ENCODE measurements at regions of chr6 and their contacts with region 1.

Region 1: GRCh38 chr6:7939184-7939863 is 28.7 kb upstream of the TXNDC5 start:
- DNase-seq: no peak
- ATAC-seq: no peak; the same call in 2 of the 3 replicates
- H3K4me3 ChIP-seq: no peak overlapping the region
- H3K27ac ChIP-seq: no peak overlapping the region
- H3K4me1 ChIP-seq: no peaks in the 10 kb centered on the region; a peak in 1 of 5 replicates
- H3K27me3 ChIP-seq: peaks cover 8 to 35% of the 10 kb centered on the region in 2 experiments; a peak in 3 of 5 replicates
- CTCF ChIP-seq: no peak
- EP300 ChIP-seq: no peak
- POLR2A ChIP-seq: no peak
- RAD21 ChIP-seq: no peak

Region 2: DNA sequence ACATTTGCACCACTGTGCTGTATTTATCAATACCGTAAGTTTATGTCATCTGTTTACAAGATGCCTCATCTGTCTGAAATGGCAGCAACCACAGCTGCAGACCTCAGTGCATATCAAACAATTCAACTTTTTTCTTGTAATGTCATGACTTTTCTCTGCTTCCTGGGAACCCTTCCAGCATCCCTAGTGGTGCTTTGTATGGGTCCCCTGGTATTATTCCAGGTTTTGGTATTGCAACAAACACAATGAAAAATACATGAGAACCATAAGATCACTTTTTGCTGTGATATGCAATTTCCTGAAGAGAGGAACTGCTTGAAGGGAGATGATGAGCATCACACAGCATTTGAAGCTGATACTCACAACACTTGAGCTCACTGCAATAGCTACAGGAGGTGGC is 16.7 kb before region 1 on chr6:
- CTCF ChIA-PET with region 1: interaction called, 6 read pairs
- POLR2A ChIA-PET with region 1: interaction called, 5 read pairs
- in situ Hi-C with region 1: no loop called
- intact Hi-C with region 1: loop called (anchors 2 kb)
- DNase-seq: no peak
- ATAC-seq: no peak
- H3K4me3 ChIP-seq: no peak overlapping the region
- H3K27ac ChIP-seq: no peak overlapping the region
- H3K4me1 ChIP-seq: peaks cover 7 to 18% of the 10 kb centered on the region in 2 experiments
- H3K27me3 ChIP-seq: peaks cover 6 to 30% of the 10 kb centered on the region in 2 experiments; a peak in 4 of 5 replicates
- CTCF ChIP-seq: no peak
- EP300 ChIP-seq: no peak
- POLR2A ChIP-seq: no peak
- RAD21 ChIP-seq: no peak